Activated CD4-positive, alpha-beta memory T cell treated with anti-CD3 and anti-CD28 coated beads, Interleukin-2, amount 10 ng/mL, durations not matched to agents 7 days and 5 days (primary cell): ENCODE measurements at regions of chrX and their contacts with region 1.

Region 1: DNA sequence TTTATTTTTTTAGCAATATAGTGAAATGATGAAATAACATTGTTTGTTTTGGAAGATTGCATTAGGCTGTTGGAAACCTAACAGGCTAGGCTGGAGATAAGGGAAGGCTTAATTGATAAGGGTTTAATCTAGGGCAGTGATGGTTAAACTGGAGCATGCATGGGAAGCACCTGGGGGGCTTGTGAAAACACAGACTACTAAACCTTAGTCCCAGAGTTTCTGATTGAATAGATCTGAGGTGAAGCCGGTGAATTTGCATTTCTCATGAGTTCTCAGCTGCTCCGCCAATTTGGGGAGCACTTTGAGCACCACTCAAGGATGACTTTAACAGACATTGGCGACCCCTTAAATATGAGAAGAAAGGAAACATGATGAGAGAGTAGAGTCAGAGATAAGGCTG is 11.5 kb downstream of the STK26 start:
- DNase-seq: no peak
- H3K4me3 Mint-ChIP-seq: no peak overlapping the region
- H3K27ac Mint-ChIP-seq: no peak overlapping the region
- H3K4me1 Mint-ChIP-seq: peaks cover 48% of the 10 kb centered on the region
- H3K27me3 Mint-ChIP-seq: no peaks in the 10 kb centered on the region

Region 2: GRCh38 chrX:131840799-131841495 is 193.7 kb before region 1 on chrX:
- CTCF ChIA-PET with region 1: no interaction called
- POLR2A ChIA-PET with region 1: no interaction called
- DNase-seq: no peak
- H3K4me3 Mint-ChIP-seq: no peak overlapping the region
- H3K27ac Mint-ChIP-seq: no peak overlapping the region
- H3K4me1 Mint-ChIP-seq: peaks cover 2% of the 10 kb centered on the region
- H3K27me3 Mint-ChIP-seq: no peaks in the 10 kb centered on the region

Region 3: GRCh38 chrX:132022967-132023895 is 11.4 kb before region 1 on chrX and contains the start of gene STK26:
- CTCF ChIA-PET with region 1: interaction called, 8 read pairs
- POLR2A ChIA-PET with region 1: interaction called, 10 read pairs
- DNase-seq: peak; percentile 84
- H3K4me3 Mint-ChIP-seq: peak within 1 kb of the TSS; percentile 91
- H3K27ac Mint-ChIP-seq: peak within 1 kb of the TSS; percentile 85
- H3K4me1 Mint-ChIP-seq: peaks cover 34% of the 10 kb centered on the region
- H3K27me3 Mint-ChIP-seq: no peaks in the 10 kb centered on the region
- total RNA-seq, gene STK26: 49.8 to 50.8 TPM

Region 4: DNA sequence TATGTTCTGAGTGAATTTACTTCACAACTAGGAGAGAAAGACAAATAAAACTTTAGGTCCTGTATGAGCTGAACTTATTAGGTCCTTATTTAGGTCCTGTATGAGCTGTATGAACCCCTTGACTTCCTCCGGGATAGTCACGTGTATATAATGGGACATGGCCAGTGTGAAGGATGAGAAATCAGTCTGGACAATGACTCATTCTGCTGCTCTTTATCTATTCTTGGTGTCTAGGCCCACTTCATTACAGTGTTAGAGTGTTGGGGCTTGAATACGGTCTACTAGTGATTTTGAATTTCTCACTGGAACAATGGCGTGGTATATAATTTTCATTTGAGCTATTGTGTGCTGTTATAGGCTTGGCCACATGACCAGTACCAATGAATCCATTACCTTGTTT is 10.3 kb after region 1 on chrX:
- CTCF ChIA-PET with region 1: no interaction called
- POLR2A ChIA-PET with region 1: no interaction called
- DNase-seq: no peak
- H3K4me3 Mint-ChIP-seq: no peak overlapping the region
- H3K27ac Mint-ChIP-seq: no peak overlapping the region
- H3K4me1 Mint-ChIP-seq: peaks cover 4% of the 10 kb centered on the region
- H3K27me3 Mint-ChIP-seq: no peaks in the 10 kb centered on the region

Region 5: GRCh38 chrX:132101799-132102198 is 67.2 kb after region 1 on chrX:
- CTCF ChIA-PET with region 1: no interaction called
- POLR2A ChIA-PET with region 1: no interaction called
- DNase-seq: no peak
- H3K4me3 Mint-ChIP-seq: no peak overlapping the region
- H3K27ac Mint-ChIP-seq: no peak overlapping the region
- H3K4me1 Mint-ChIP-seq: no peaks in the 10 kb centered on the region
- H3K27me3 Mint-ChIP-seq: peaks cover 6% of the 10 kb centered on the region

Region 6: DNA sequence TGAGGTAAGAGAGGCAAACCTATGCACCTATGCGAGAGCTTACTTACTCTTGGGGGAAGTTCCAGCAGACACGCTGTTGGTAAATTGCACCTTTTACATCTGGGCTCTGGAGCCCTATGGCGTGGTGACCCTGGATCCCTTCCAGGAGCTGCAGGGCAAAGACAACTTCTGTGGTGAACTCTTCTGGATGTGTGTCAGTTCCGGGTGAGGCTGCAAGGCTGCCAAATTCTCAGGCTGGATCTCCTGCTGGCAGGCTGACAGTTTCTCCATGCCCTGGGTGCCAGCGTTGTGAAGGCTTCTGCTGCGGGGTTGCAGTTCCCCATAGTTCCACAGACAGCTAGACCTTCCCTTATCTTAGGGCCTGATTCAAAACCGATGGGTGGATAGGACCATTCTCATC is 146.7 kb after region 1 on chrX:
- CTCF ChIA-PET with region 1: no interaction called
- POLR2A ChIA-PET with region 1: no interaction called
- DNase-seq: no peak
- H3K4me3 Mint-ChIP-seq: no peak overlapping the region
- H3K27ac Mint-ChIP-seq: no peak overlapping the region
- H3K4me1 Mint-ChIP-seq: no peaks in the 10 kb centered on the region
- H3K27me3 Mint-ChIP-seq: no peaks in the 10 kb centered on the region